Activated CD8-positive, alpha-beta T cell treated with anti-CD3 and anti-CD28 coated beads for 36 hours (primary cell): ENCODE measurements at regions of chr20 and their contacts with region 1.

Region 1: GRCh38 chr20:35994994-35995453 is 26.6 kb downstream of the CNBD2 start:
- DNase-seq: peak; percentile 91
- ATAC-seq: peak; percentile 88
- H3K4me3 Mint-ChIP-seq: no peak overlapping the region
- H3K27ac Mint-ChIP-seq: no peak overlapping the region
- H3K4me1 Mint-ChIP-seq: peaks cover 3% of the 10 kb centered on the region
- H3K27me3 Mint-ChIP-seq: peaks cover 2% of the 10 kb centered on the region
- CTCF ChIP-seq: peak; percentile 84

Region 2: DNA sequence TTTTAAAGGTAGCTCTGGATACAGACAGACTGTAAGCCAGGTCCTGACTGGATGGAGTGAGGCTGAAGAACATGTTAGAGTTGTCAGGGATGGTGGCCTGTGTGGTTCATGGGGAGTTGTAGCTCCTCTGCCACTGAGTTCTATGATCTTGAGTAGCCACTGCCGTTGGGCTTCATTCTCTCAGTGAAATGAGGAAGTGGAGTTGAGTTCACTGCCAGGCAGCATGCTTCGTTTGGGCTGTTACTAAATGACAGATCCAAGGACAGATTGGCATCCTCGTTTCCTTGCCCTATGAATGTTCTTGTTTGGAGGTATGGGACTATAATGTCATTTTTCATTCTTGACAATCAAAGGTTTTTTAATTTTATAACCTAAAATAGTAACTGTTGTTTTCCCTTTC is 77.9 kb before region 1 on chr20:
- CTCF ChIA-PET with region 1: no interaction called
- POLR2A ChIA-PET with region 1: no interaction called
- intact Hi-C with region 1: no loop called
- DNase-seq: no peak
- ATAC-seq: no peak
- H3K4me3 Mint-ChIP-seq: no peak overlapping the region
- H3K27ac Mint-ChIP-seq: no peak overlapping the region
- H3K4me1 Mint-ChIP-seq: no peaks in the 10 kb centered on the region
- H3K27me3 Mint-ChIP-seq: no peaks in the 10 kb centered on the region
- CTCF ChIP-seq: no peak

Region 3: GRCh38 chr20:35978041-35978513 is 16.9 kb before region 1 on chr20:
- CTCF ChIA-PET with region 1: interaction called, 69 read pairs
- POLR2A ChIA-PET with region 1: no interaction called
- intact Hi-C with region 1: no loop called
- DNase-seq: no peak
- ATAC-seq: no peak
- H3K4me3 Mint-ChIP-seq: no peak overlapping the region
- H3K27ac Mint-ChIP-seq: no peak overlapping the region
- H3K4me1 Mint-ChIP-seq: no peaks in the 10 kb centered on the region
- H3K27me3 Mint-ChIP-seq: no peaks in the 10 kb centered on the region
- CTCF ChIP-seq: no peak

Region 4: DNA sequence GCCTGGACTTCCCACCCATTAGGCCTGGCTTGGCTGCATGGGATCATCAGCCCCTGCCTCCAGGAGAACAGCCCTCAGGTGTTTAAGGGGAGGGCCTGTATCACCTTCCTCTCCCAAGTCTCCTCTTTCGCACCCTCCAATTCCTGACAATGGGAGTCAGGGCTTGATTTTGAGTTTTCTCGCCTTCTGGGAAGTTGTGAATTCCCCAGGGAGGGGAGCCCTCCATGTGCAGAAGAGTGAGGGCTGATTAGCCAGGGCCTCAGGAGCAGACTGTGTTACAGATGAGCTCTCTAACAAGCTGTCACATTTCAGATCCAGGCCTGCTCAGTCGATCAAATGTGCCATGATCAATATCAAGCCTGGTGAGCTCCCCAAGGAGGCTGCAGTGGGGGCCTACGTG is 15.8 kb after region 1 on chr20:
- CTCF ChIA-PET with region 1: interaction called, 25 read pairs
- POLR2A ChIA-PET with region 1: interaction called, 3 read pairs
- intact Hi-C with region 1: no loop called
- DNase-seq: no peak
- ATAC-seq: no peak
- H3K4me3 Mint-ChIP-seq: no peak overlapping the region
- H3K27ac Mint-ChIP-seq: no peak overlapping the region
- H3K4me1 Mint-ChIP-seq: no peaks in the 10 kb centered on the region
- H3K27me3 Mint-ChIP-seq: no peaks in the 10 kb centered on the region
- CTCF ChIP-seq: no peak

Region 5: DNA sequence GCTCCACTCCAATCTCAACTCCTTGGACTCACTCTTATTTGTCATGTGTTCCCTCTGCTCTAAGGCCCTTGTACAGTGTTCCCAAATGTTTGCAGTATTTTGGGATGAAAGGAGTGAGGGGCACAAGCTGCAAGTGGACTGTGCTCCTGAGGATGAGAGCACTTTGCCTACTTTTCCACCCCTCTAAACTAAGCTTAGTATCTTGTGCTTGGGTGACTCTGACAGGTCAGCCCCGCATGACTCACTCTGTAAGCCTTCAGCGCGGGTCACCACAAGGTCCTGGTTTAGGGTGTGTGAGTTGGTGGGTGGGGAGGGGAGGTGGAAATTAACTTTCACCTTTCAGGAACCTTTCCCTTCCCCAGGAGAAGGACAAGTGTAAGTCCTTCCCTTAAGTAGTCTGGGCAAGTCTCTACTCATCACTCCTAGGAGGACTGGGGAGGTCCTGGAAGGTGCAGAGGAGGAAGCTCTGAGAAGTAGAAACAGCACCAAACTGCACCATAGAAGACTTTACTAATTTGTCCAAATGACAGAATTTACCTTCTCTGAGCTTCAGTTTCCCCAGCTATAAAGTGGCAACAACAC is 90.8 kb after region 1 on chr20:
- CTCF ChIA-PET with region 1: interaction called, 11 read pairs
- POLR2A ChIA-PET with region 1: no interaction called
- intact Hi-C with region 1: no loop called
- DNase-seq: peak; percentile 19
- ATAC-seq: peak; percentile 61
- H3K4me3 Mint-ChIP-seq: no peak overlapping the region
- H3K27ac Mint-ChIP-seq: no peak overlapping the region
- H3K4me1 Mint-ChIP-seq: no peaks in the 10 kb centered on the region
- H3K27me3 Mint-ChIP-seq: peaks cover 20% of the 10 kb centered on the region
- CTCF ChIP-seq: no peak

Region 6: DNA sequence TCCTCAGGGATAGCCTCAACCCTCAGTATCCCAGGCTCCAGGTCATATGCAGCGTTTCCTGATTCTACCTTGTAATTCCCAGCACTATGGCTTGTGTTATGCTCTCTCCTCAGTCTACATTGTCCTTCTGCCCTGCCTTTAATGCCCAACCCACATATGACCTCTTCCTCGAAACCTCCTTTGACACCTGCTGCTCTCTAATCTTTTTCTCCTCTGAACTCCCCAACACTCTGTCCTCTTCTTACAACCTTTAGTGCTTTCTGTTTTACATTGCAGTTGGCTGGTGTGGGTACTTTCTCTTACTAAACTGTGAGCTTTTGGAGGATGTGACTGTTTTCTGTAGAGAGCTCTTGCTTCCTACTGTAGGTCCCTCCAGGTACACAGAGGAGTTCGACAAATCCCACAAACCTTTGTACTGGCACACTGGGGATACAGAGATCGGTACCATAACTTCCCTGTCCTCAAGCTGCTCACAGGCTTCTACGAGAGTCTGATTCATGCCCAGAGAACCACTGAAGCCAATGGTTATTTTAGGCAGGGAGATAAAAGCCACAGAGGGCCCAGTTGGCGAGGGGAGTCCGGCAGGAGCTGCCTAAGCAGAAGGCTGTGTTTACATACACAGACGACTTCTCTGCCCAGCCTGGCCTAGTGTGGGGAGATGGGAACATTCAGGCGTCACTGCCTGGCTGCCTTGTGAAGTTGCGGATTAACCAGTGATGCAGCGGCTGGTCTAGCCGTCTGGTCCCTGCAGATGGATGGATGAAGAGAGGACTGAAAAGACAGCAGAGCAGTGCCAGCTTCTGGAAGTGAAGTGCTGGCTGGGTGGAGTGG is 151.1 kb after region 1 on chr20:
- CTCF ChIA-PET with region 1: interaction called, 339 read pairs
- POLR2A ChIA-PET with region 1: no interaction called
- intact Hi-C with region 1: no loop called
- DNase-seq: no peak
- ATAC-seq: no peak
- H3K4me3 Mint-ChIP-seq: no peak overlapping the region
- H3K27ac Mint-ChIP-seq: no peak overlapping the region
- H3K4me1 Mint-ChIP-seq: peaks cover 4% of the 10 kb centered on the region
- H3K27me3 Mint-ChIP-seq: peaks cover 13% of the 10 kb centered on the region
- CTCF ChIP-seq: no peak

Region 7: DNA sequence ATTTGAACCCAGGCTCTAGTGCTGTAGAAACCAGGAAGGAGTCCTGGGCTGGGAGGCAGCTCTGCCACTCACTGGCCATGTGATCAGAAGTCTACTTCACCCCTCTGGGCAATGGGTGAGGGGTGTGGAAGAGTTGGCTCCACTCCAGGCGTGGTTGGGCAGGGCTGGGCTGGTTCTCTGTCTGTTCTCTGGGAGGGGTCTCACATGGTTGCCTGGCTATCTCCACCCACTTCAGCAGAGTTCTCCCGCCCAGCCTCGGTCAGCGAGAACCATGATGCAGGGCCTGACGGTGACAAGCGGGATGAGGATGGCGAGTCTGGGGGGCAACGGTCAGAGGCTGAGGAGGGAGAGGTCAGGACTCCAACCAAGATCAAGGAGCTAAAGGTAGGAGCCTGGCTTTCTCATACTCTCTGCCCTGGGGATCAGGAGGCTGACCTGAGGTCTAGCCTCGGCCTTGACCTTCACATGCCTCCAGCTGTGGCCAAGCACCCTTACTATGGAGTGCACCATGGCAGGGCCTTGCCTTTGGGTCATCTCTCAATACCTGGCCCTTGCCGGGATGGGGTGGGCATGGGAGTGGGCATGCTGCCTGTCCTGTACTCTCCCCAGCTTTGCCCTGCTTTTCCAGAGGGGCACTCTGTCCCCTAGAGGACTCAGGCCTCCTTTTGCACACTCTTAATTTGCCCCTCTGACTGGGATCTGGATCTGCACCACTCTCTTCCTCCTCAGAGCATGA is 199.1 kb after region 1 on chr20:
- CTCF ChIA-PET with region 1: interaction called, 73 read pairs
- POLR2A ChIA-PET with region 1: no interaction called
- intact Hi-C with region 1: loop called (anchors 2 kb)
- DNase-seq: no peak
- ATAC-seq: no peak
- H3K4me3 Mint-ChIP-seq: no peak overlapping the region
- H3K27ac Mint-ChIP-seq: no peak overlapping the region
- H3K4me1 Mint-ChIP-seq: no peaks in the 10 kb centered on the region
- H3K27me3 Mint-ChIP-seq: no peaks in the 10 kb centered on the region
- CTCF ChIP-seq: no peak

Region 8: GRCh38 chr20:36399147-36399968 is 404.3 kb after region 1 on chr20:
- CTCF ChIA-PET with region 1: interaction called, 13 read pairs
- POLR2A ChIA-PET with region 1: no interaction called
- intact Hi-C with region 1: no loop called
- DNase-seq: peak; percentile 80
- ATAC-seq: peak; percentile 77
- H3K4me3 Mint-ChIP-seq: no peak overlapping the region
- H3K27ac Mint-ChIP-seq: no peak overlapping the region
- H3K4me1 Mint-ChIP-seq: no peaks in the 10 kb centered on the region
- H3K27me3 Mint-ChIP-seq: peaks cover 20% of the 10 kb centered on the region
- CTCF ChIP-seq: peak; percentile 61